ENCODE measurements at regions of chr4 and their contacts with region 1.

Region 1: DNA sequence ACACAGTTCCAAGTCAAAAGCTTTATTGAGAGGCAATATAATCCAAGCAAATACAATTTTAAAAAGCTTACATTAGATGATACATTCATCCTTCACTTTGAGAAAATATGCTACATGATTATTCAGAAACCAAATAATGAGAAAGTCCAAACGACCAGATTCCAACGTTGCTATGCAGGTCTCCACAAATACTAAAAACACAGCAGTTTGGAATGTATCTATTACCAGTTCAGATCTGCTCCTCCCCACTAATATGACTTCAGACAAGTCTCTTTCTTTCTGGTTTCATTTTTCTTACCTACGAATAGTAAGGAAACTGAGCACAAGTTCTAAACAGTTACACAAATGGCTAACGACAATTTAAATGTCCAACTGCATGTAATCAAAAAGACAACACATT is 9.5 kb downstream of the NAF1 start:
- DNase-seq: no peak
- ATAC-seq: no peak
- H3K4me3 Mint-ChIP-seq: no peak overlapping the region
- H3K27ac Mint-ChIP-seq: no peak overlapping the region
- H3K4me1 Mint-ChIP-seq: peaks cover 5% of the 10 kb centered on the region
- H3K27me3 Mint-ChIP-seq: no peaks in the 10 kb centered on the region
- CTCF ChIP-seq: no peak

Region 2: DNA sequence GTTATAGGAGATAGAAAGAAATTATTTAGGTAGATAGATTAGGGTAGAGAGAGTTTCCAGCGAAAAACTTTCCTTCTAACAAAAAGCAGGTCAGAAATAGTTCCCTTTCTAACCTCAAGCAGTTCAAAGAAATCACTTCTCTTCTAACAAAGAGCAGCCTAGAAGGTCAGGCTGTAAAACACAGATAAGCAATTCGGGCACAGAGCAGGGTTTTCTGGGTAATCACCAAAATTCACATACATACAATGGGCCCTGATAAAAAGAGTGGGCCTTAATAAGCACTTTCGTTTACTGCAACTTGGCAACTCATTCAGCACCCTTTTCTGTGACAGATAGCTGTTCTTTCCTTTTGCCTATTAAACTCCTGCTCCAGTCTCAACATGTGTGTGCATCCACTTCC is 22.9 kb after region 1 on chr4:
- CTCF ChIA-PET with region 1: no interaction called
- POLR2A ChIA-PET with region 1: interaction called, 10 read pairs
- intact Hi-C with region 1: no loop called
- DNase-seq: no peak
- ATAC-seq: no peak
- H3K4me3 Mint-ChIP-seq: no peak overlapping the region
- H3K27ac Mint-ChIP-seq: no peak overlapping the region
- H3K4me1 Mint-ChIP-seq: no peaks in the 10 kb centered on the region
- H3K27me3 Mint-ChIP-seq: peaks cover 16% of the 10 kb centered on the region
- CTCF ChIP-seq: no peak